Right cardiac atrium (tissue), 5 donors: ENCODE measurements at regions of chr11 and their contacts with region 1.

Region 1: GRCh38 chr11:103326070-103326794 is 217.0 kb downstream of the DYNC2H1 start:
- DNase-seq: peak; percentile 27 to 67 (median 60)
- ATAC-seq: peak; percentile 87 to 93
- H3K4me3 ChIP-seq: no peak overlapping the region
- H3K27ac ChIP-seq: no peak overlapping the region
- H3K4me1 ChIP-seq: peaks cover 2% of the 10 kb centered on the region
- H3K27me3 ChIP-seq: no peaks in the 10 kb centered on the region

Region 2: DNA sequence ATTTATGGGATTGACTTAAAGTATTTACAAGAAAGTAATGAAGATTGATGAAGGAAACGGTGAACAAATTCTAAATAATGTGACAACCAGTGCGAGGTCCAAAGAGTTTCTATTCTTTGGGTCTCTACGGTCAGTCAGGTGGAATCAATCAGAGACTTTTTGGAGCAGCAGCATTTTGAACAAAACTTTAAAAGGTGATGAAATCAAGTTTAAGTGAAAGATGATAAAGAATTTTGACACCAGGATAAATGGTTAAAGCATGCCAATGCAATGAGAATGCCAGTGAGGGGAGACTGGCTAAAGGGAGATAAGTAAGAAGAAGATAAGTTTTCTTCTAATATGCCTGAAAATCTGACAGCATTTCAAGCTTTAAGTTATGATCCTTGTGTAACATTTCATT is 302.1 kb before region 1 on chr11:
- intact Hi-C with region 1: no loop called
- DNase-seq: no peak
- ATAC-seq: no peak
- H3K4me3 ChIP-seq: no peak overlapping the region
- H3K27ac ChIP-seq: no peak overlapping the region
- H3K4me1 ChIP-seq: no peaks in the 10 kb centered on the region
- H3K27me3 ChIP-seq: no peaks in the 10 kb centered on the region

Region 3: DNA sequence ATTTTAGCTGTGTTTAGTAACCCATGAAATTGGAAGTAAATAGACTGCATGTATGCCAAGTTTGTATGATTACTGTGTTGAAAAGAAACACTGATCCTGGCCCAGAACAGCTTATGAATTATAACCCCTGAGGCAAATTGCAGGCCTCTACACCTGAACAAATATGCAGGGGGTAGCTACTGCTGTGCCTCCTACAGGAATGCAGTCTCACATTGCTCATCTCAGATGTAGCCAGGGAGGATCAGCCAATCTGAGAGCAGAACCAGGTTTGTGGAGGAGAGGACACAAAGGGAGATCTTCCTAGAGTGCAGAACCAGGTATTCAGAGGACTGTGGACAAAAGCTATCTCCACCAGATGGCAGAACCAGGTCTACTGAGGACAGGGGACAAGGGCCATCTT is 268.1 kb after region 1 on chr11:
- intact Hi-C with region 1: loop called in 1 of 4 experiments (anchors 10 kb)
- DNase-seq: no peak
- ATAC-seq: no peak
- H3K4me3 ChIP-seq: no peak overlapping the region
- H3K27ac ChIP-seq: no peak overlapping the region
- H3K4me1 ChIP-seq: no peaks in the 10 kb centered on the region
- H3K27me3 ChIP-seq: no peaks in the 10 kb centered on the region

Region 4: DNA sequence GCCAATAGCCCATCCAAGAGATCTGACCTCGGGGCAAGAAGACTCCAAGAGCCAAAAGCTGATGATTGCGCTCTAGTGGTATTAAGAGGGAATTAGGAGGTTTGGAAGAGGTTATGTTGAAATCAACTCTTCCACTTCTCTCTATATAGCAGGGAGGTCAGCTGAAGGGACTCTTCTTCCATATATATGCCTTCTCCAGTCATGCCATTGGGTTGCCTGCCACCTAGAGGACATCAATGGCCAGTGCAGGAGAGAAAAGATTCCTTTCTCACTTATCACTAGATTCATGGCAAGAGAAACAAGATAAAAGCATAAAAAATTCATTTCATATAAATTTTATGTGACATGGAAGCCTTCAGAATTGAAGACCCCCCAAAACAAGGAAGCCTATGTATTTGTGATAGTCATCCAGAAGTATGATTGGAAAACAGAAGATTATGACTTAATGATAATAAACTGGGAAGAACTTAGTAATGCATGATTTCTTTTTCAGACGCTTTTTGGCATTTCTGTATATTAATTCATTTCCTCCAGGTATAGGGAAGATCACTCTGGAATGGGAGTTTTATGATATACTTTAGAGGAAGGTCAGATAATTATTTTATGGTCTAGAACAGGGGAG is 275.1 kb after region 1 on chr11:
- intact Hi-C with region 1: loop called in 2 of 4 experiments (anchors 5 to 10 kb)
- DNase-seq: peak in 2 of 3 donors; percentile 22 to 39
- ATAC-seq: peak; percentile 76 to 81
- H3K4me3 ChIP-seq: no peak overlapping the region
- H3K27ac ChIP-seq: no peak overlapping the region
- H3K4me1 ChIP-seq: no peaks in the 10 kb centered on the region
- H3K27me3 ChIP-seq: no peaks in the 10 kb centered on the region